IMR-90 (cell line): ENCODE measurements at regions of chr19 and their contacts with region 1.

Region 1: GRCh38 chr19:13117772-13118423 is at the start of gene NACC1:
- DNase-seq: peak; percentile 82
- ATAC-seq: peak; percentile 89
- H3K4me3 ChIP-seq: peak within 1 kb of the TSS; percentile 99
- H3K27ac ChIP-seq: peak within 1 kb of the TSS; percentile 97
- H3K4me1 ChIP-seq: peaks cover 25% of the 10 kb centered on the region
- H3K27me3 ChIP-seq: no peaks in the 10 kb centered on the region
- CTCF ChIP-seq: no peak
- POLR2A ChIP-seq: no peak
- RAD21 ChIP-seq: no peak
- total RNA-seq, gene NACC1: 42.5 and 56.7 TPM in 2 replicates

Region 2: GRCh38 chr19:12881172-12881808 is 236.6 kb before region 1 on chr19 and contains the start of gene DNASE2:
- CTCF ChIA-PET with region 1: no interaction called
- POLR2A ChIA-PET with region 1: no interaction called
- dilution Hi-C with region 1: no loop called
- in situ Hi-C with region 1: no loop called
- intact Hi-C with region 1: no loop called
- DNase-seq: peak; percentile 87
- ATAC-seq: peak; percentile 96
- H3K4me3 ChIP-seq: peak within 1 kb of the TSS; percentile 61
- H3K27ac ChIP-seq: peak within 1 kb of the TSS; percentile 2; the same call in 1 of the 2 replicates
- H3K4me1 ChIP-seq: peaks cover 5% of the 10 kb centered on the region; the same call in 1 of the 2 replicates
- H3K27me3 ChIP-seq: peaks cover 22% of the 10 kb centered on the region
- CTCF ChIP-seq: no peak
- POLR2A ChIP-seq: no peak
- RAD21 ChIP-seq: no peak
- total RNA-seq, gene DNASE2: 6.4 and 9.5 TPM in 2 replicates

Region 3: DNA sequence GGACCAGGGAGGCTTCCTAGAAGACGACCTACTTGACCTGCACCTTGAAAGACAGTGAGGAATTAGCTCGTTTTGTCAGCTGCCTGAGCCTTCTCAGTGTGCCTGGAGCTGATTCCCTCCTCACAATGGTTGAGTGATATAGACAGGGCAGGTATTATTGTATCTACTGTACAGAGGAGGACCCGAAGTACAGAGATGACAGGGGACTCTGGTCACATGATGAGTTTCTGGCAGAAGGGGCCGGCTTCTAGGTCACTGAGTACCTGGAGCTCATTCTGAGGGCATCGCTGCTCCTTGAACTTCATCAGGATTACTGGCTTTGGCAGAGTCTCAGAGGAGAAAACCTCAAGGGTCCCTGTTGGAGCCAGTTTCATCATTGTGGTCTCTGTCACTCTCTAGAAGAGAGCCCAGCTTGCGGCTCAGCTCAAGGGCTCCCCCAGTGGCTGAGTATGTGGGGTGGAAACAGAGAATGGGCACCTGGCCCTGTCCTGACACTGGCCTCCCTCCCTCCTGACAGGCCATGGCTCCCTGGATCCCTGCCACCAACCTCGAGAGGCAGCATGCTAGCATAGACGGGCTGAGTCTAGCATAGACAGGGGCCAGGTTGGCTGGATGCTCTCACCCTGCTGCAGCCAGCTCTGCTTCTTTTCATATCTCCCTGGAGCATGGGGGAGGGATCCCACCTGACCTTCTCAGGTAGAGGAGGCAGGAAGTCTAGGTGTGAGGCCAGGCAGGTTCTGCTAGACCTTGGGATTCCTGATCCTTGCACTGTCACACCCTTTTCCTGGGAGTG is 83.9 kb before region 1 on chr19:
- CTCF ChIA-PET with region 1: no interaction called
- POLR2A ChIA-PET with region 1: no interaction called
- dilution Hi-C with region 1: no loop called
- in situ Hi-C with region 1: no loop called
- intact Hi-C with region 1: no loop called
- DNase-seq: peak; percentile 45
- ATAC-seq: peak; percentile 38; the same call in 1 of the 2 replicates
- H3K4me3 ChIP-seq: no peak overlapping the region
- H3K27ac ChIP-seq: no peak overlapping the region
- H3K4me1 ChIP-seq: peaks cover 45% of the 10 kb centered on the region
- H3K27me3 ChIP-seq: no peaks in the 10 kb centered on the region
- CTCF ChIP-seq: peak; percentile 66
- POLR2A ChIP-seq: no peak
- RAD21 ChIP-seq: peak; percentile 61

Region 4: DNA sequence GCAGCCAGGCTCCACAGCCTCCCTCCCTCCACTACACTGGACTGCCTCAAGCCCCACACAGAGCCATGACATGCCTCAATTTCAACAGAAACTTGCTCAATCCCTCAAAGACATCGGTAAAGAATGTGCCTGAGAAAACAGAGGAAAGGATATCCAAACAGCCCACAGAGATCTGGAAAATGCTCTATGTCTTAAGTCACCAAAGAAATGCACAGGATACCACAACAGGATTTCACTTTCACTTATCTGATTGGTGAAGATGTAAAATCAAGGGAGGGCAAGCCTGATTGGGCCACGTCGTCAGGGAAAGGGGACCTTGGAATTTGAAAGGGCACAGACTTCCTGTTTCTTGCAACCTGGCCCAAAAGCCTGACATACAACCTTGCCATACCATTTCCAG is 374.2 kb after region 1 on chr19:
- CTCF ChIA-PET with region 1: no interaction called
- POLR2A ChIA-PET with region 1: interaction called, 22 read pairs
- dilution Hi-C with region 1: no loop called
- in situ Hi-C with region 1: no loop called
- intact Hi-C with region 1: no loop called
- DNase-seq: peak; percentile 93
- ATAC-seq: peak; percentile 98
- H3K4me3 ChIP-seq: no peak overlapping the region
- H3K27ac ChIP-seq: peak overlapping the region; percentile 68; the same call in 1 of the 2 replicates
- H3K4me1 ChIP-seq: peaks cover 7% of the 10 kb centered on the region
- H3K27me3 ChIP-seq: no peaks in the 10 kb centered on the region
- CTCF ChIP-seq: no peak
- POLR2A ChIP-seq: no peak
- RAD21 ChIP-seq: no peak